PC-3 (cell line): ENCODE measurements at regions of chr3 and their contacts with region 1.

Region 1: GRCh38 chr3:102053375-102053989 is 204.2 kb downstream of the NFKBIZ start:
- DNase-seq: peak; percentile 80
- ATAC-seq: peak; percentile 96
- H3K4me3 ChIP-seq: no peak overlapping the region
- H3K27ac ChIP-seq: peak overlapping the region; percentile 15
- H3K4me1 ChIP-seq: peaks cover 17% of the 10 kb centered on the region
- H3K27me3 ChIP-seq: no peaks in the 10 kb centered on the region
- CTCF ChIP-seq: no peak

Region 2: GRCh38 chr3:102006812-102007485 is 46.5 kb before region 1 on chr3:
- CTCF ChIA-PET with region 1: no interaction called
- POLR2A ChIA-PET with region 1: no interaction called
- intact Hi-C with region 1: loop called (anchors 5 kb)
- DNase-seq: peak; percentile 95
- ATAC-seq: peak; percentile 96
- H3K4me3 ChIP-seq: peak overlapping the region; percentile 20; the same call in 1 of the 2 replicates
- H3K27ac ChIP-seq: peak overlapping the region; percentile 92
- H3K4me1 ChIP-seq: peaks cover 26% of the 10 kb centered on the region
- H3K27me3 ChIP-seq: no peaks in the 10 kb centered on the region
- CTCF ChIP-seq: no peak

Region 3: DNA sequence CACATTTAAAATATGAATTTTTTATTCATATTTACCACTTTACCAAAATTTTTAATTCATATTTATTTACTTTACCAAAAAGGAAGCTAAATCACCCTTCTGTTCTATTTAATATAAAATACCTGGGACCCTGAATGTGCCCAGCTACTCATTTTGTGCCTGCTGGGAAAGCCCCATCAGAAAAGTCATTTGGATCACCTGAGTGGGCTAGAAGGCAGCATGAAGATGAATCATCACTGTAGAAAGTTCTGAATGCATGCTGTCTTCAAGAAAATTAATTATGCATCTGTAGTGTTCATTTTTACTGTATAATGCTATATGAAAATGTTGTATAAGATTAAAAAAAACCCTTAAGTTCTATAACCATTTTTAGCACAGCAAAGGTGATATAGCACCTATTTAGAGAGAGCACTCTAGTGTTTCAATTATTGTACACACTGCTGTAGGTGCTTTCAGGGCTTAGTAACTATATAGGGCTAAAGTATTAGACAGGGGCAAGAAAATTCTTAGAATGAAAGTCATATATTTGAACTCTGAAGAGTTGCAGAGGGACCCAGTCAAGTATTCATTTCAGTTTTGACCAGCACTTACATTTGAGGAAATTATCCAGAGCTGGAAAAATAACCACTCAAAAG is 29.1 kb before region 1 on chr3:
- CTCF ChIA-PET with region 1: no interaction called
- POLR2A ChIA-PET with region 1: no interaction called
- intact Hi-C with region 1: no loop called
- DNase-seq: no peak
- ATAC-seq: no peak
- H3K4me3 ChIP-seq: no peak overlapping the region
- H3K27ac ChIP-seq: no peak overlapping the region
- H3K4me1 ChIP-seq: no peaks in the 10 kb centered on the region
- H3K27me3 ChIP-seq: no peaks in the 10 kb centered on the region
- CTCF ChIP-seq: no peak

Region 4: DNA sequence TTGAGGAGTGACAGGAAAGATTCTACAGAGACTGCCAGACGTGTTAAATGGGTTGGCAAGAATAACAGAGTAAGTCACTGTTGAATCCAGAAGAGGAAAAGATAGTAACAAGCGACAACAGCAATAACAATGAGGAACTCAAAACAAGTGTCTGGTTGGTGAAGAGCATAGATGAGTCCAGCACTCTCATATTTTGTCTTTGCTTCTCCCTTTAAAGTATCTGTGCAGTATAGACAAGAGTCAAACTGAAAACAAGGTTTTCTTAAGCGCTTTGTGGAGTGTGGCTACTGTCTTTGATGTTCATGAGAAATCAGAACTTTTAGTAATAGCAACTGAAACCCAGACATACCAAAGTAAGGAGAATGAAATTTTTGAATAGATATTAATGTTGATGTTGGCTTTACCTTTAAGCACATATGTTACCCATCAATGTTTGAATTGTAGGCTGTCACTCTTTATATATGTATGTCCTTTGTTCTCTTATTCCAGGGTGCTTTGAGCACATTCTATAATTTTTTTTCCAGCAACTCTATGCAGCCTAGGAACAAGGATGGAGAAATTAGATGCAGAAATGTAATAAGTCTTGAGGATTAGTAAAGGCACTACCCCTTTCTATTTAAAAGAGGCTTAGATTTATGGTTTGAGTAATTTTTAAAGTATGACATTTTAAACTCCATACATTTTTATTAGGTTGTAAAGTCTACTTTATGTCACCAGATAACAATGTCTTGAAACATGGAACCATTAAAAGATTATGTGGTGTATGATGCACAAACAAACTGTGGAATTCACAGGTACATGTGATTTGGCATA is 18.6 kb before region 1 on chr3:
- CTCF ChIA-PET with region 1: no interaction called
- POLR2A ChIA-PET with region 1: no interaction called
- intact Hi-C with region 1: loop called (anchors 2 kb)
- DNase-seq: peak; percentile 68
- ATAC-seq: peak; percentile 85
- H3K4me3 ChIP-seq: no peak overlapping the region
- H3K27ac ChIP-seq: peak overlapping the region; percentile 60
- H3K4me1 ChIP-seq: peaks cover 15% of the 10 kb centered on the region
- H3K27me3 ChIP-seq: no peaks in the 10 kb centered on the region
- CTCF ChIP-seq: no peak

Region 5: GRCh38 chr3:102400766-102401165 is 347.3 kb after region 1 on chr3:
- CTCF ChIA-PET with region 1: no interaction called
- POLR2A ChIA-PET with region 1: no interaction called
- intact Hi-C with region 1: no loop called
- DNase-seq: peak; percentile 94
- ATAC-seq: peak; percentile 94
- H3K4me3 ChIP-seq: peak overlapping the region; percentile 10; the same call in 1 of the 2 replicates
- H3K27ac ChIP-seq: peak overlapping the region; percentile 86
- H3K4me1 ChIP-seq: peaks cover 34% of the 10 kb centered on the region
- H3K27me3 ChIP-seq: no peaks in the 10 kb centered on the region
- CTCF ChIP-seq: no peak